ENCODE measurements at regions of chr14 and their contacts with region 1.

Region 1: GRCh38 chr14:49862089-49862673 is 9.6 kb upstream of the NEMF start:
- DNase-seq: peak; percentile 85 to 91 (median 88)
- H3K4me3 ChIP-seq: peak overlapping the region; percentile 61 to 76
- H3K4me3 Mint-ChIP-seq: no peak overlapping the region
- H3K27ac ChIP-seq: peak overlapping the region; percentile 97
- H3K27ac Mint-ChIP-seq: no peak overlapping the region
- H3K4me1 ChIP-seq: peaks cover 38% of the 10 kb centered on the region
- H3K4me1 Mint-ChIP-seq: peaks cover 0 to 11% (median 6%) of the 10 kb centered on the region in 4 donors
- H3K27me3 ChIP-seq: no peaks in the 10 kb centered on the region
- H3K27me3 Mint-ChIP-seq: peaks cover 3 to 8% of the 10 kb centered on the region in 2 donors

Region 2: DNA sequence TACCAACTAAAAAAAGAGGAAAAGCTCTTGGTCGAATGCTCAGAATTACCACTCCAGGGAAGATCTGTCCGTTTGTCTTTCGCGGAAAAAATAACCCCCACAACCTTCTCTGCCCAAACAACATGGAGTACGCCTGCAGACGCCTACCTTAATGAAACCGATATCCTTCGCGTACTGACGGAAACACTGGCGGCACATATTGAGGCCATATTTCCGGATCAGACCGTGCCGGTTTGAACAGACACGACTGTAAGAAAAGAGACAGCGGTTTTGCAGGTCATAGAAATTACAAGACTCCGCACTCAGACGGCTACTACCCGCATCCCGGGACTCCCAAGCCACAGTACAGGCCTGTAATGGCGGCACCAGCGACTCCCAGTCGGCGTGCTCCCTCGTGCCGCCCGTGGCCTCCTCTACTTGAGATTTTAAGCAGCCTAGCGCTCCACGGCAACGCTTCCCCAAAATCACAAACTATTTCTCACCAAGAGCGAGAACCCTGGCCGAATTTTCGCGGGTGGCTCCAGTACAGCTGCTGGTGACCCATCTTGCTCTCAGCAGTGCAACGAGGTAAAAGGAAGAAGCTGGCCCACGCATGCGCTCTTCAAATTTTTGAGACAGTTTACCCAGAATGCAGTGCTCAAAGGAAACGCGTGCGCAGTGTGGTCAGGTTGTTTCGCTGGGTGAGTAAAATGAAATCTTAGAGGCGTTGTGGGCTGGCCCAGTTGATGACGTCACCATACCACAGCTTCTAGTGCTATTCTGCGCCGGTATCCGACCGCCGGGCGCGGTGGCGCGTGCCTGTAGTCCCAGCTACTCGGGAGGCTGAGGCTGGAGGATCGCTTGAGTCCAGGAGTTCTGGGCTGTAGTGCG is 276.1 kb before region 1 on chr14 and contains the start of gene RPS29:
- CTCF ChIA-PET with region 1: interaction called, 3 read pairs
- POLR2A ChIA-PET with region 1: interaction called, 22 read pairs
- intact Hi-C with region 1: no loop called
- DNase-seq: peak; percentile 98 to 99 (median 99)
- H3K4me3 ChIP-seq: peak within 1 kb of the TSS; percentile 93 to 98
- H3K4me3 Mint-ChIP-seq: peak within 1 kb of the TSS; percentile 87 to 98 (median 95)
- H3K27ac ChIP-seq: peak within 1 kb of the TSS; percentile 95
- H3K27ac Mint-ChIP-seq: peak within 1 kb of the TSS; percentile 88 to 100 (median 99)
- H3K4me1 ChIP-seq: peaks cover 38% of the 10 kb centered on the region
- H3K4me1 Mint-ChIP-seq: peaks cover 29 to 62% (median 42%) of the 10 kb centered on the region in 4 donors
- H3K27me3 ChIP-seq: no peaks in the 10 kb centered on the region
- H3K27me3 Mint-ChIP-seq: peaks cover 0 to 4% of the 10 kb centered on the region in 2 donors
- total RNA-seq, gene RPS29: 3,602 to 3,749 TPM

Region 3: DNA sequence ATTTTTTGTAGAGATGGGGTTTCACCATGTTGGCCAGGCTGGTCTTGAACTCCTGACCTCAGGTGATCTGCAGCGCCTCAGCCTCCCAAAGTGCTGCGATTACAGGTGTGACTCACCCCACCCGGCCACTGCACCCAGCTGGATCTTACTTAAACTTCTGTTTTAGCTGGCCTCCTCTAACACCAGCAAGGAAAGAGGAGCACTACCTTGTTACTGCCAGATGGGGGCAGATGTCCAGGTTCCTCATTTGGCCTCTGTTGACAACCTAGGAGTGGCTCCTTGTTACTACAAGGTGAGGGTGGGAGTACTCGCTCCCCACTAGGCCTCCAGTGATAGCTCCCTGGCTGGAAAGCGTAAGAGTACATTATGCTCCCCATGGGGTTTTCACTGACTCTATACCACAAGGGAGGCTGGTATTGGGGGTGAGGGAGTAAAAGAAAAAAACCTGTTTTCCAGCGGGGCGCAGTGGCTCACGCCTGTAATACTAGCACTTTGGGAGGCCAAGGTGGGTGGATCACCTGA is 17.6 kb after region 1 on chr14:
- CTCF ChIA-PET with region 1: interaction called, 68 read pairs
- POLR2A ChIA-PET with region 1: interaction called, 15 read pairs
- intact Hi-C with region 1: loop called (anchors 1 kb)
- DNase-seq: peak; percentile 63 to 72 (median 65)
- H3K4me3 ChIP-seq: no peak overlapping the region
- H3K4me3 Mint-ChIP-seq: no peak overlapping the region
- H3K27ac ChIP-seq: no peak overlapping the region
- H3K27ac Mint-ChIP-seq: peak overlapping the region; percentile 67 to 89 (median 82)
- H3K4me1 ChIP-seq: peaks cover 15% of the 10 kb centered on the region
- H3K4me1 Mint-ChIP-seq: peaks cover 6 to 12% (median 8%) of the 10 kb centered on the region in 4 donors
- H3K27me3 ChIP-seq: no peaks in the 10 kb centered on the region
- H3K27me3 Mint-ChIP-seq: no peaks in the 10 kb centered on the region

Region 4: GRCh38 chr14:49971156-49972130 is 109.3 kb after region 1 on chr14:
- CTCF ChIA-PET with region 1: interaction called, 72 read pairs
- POLR2A ChIA-PET with region 1: interaction called, 81 read pairs
- intact Hi-C with region 1: no loop called
- DNase-seq: peak; percentile 75 to 85 (median 82)
- H3K4me3 ChIP-seq: peak overlapping the region; percentile 36 to 44
- H3K4me3 Mint-ChIP-seq: peak overlapping the region; percentile 77 to 89 (median 82)
- H3K27ac ChIP-seq: peak overlapping the region; percentile 73
- H3K27ac Mint-ChIP-seq: peak overlapping the region; percentile 87 to 98 (median 96)
- H3K4me1 ChIP-seq: peaks cover 69% of the 10 kb centered on the region
- H3K4me1 Mint-ChIP-seq: peaks cover 44 to 76% (median 62%) of the 10 kb centered on the region in 4 donors
- H3K27me3 ChIP-seq: no peaks in the 10 kb centered on the region
- H3K27me3 Mint-ChIP-seq: no peaks in the 10 kb centered on the region

Region 5: DNA sequence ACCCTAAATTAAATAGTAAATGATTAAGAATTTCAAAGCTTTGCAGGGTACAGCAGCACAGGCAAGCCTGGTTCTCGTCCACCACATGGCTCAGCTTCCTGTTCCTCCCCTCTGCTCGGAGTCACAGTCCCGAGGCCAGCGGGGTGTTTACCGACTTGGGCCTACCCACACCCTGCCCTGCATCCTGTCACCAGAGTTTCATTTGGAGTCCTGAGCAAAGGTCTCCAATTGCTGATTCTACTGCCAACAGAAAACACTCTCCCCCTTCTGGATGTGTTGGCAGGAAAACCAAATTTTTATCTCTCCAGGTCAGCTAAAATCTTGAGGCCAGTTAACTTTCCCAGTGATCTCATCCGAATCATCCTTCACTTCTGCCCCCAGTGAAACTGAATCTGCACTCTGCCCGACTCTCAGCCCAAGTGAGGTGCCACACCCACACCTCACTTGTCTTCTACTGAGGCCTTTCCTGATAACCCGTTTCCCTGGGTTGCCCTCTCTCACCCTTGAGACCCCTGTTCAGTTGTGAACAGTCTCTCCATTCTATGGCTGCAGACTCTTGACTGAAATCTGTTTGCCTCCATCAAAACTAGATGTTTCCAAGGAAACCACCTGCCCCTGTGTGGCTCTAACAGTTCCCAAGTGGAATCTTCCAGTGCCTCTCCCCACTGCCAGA is 183.0 kb after region 1 on chr14:
- CTCF ChIA-PET with region 1: interaction called, 56 read pairs
- POLR2A ChIA-PET with region 1: interaction called, 57 read pairs
- intact Hi-C with region 1: no loop called
- DNase-seq: peak; percentile 59 to 79 (median 71)
- H3K4me3 ChIP-seq: peak overlapping the region in 1 of 2 donors; percentile 12
- H3K4me3 Mint-ChIP-seq: peak overlapping the region; percentile 28 to 89 (median 66)
- H3K27ac ChIP-seq: peak overlapping the region; percentile 64
- H3K27ac Mint-ChIP-seq: peak overlapping the region; percentile 89 to 97 (median 94)
- H3K4me1 ChIP-seq: peaks cover 75% of the 10 kb centered on the region
- H3K4me1 Mint-ChIP-seq: peaks cover 56 to 85% (median 71%) of the 10 kb centered on the region in 4 donors
- H3K27me3 ChIP-seq: no peaks in the 10 kb centered on the region
- H3K27me3 Mint-ChIP-seq: no peaks in the 10 kb centered on the region

Region 6: GRCh38 chr14:50099335-50099734 is 237.2 kb after region 1 on chr14:
- CTCF ChIA-PET with region 1: interaction called, 189 read pairs
- POLR2A ChIA-PET with region 1: interaction called, 151 read pairs
- intact Hi-C with region 1: no loop called
- DNase-seq: peak in 1 of 5 donors; percentile 25
- H3K4me3 ChIP-seq: no peak overlapping the region
- H3K4me3 Mint-ChIP-seq: peak overlapping the region in 5 of 8 donors; percentile 7 to 38 (median 28)
- H3K27ac ChIP-seq: no peak overlapping the region
- H3K27ac Mint-ChIP-seq: peak overlapping the region; percentile 10 to 92 (median 80)
- H3K4me1 ChIP-seq: peaks cover 69% of the 10 kb centered on the region
- H3K4me1 Mint-ChIP-seq: peaks cover 41 to 68% (median 54%) of the 10 kb centered on the region in 4 donors
- H3K27me3 ChIP-seq: no peaks in the 10 kb centered on the region
- H3K27me3 Mint-ChIP-seq: no peaks in the 10 kb centered on the region

Region 7: GRCh38 chr14:51846631-51847488 is 1984.7 kb after region 1 on chr14:
- CTCF ChIA-PET with region 1: no interaction called
- POLR2A ChIA-PET with region 1: no interaction called
- intact Hi-C with region 1: loop called (anchors 5 kb)
- DNase-seq: peak; percentile 92 to 99 (median 96)
- H3K4me3 ChIP-seq: peak overlapping the region; percentile 14 to 72
- H3K4me3 Mint-ChIP-seq: peak overlapping the region; percentile 85 to 98 (median 91)
- H3K27ac ChIP-seq: peak overlapping the region; percentile 92
- H3K27ac Mint-ChIP-seq: peak overlapping the region; percentile 98 to 100 (median 99)
- H3K4me1 ChIP-seq: peaks cover 51% of the 10 kb centered on the region
- H3K4me1 Mint-ChIP-seq: peaks cover 46 to 73% (median 52%) of the 10 kb centered on the region in 4 donors
- H3K27me3 ChIP-seq: no peaks in the 10 kb centered on the region
- H3K27me3 Mint-ChIP-seq: peaks cover 2% of the 10 kb centered on the region in 2 donors

Measured in CD4-positive, alpha-beta memory T cell (primary cell).